AG04450 (cell line): ENCODE measurements at regions of chr4 and their contacts with region 1.

Region 1: GRCh38 chr4:80266253-80266901 is at the start of gene FGF5:
- DNase-seq: peak; percentile 85
- H3K4me3 ChIP-seq: peak within 1 kb of the TSS; percentile 63
- H3K27ac ChIP-seq: peak within 1 kb of the TSS; percentile 96
- H3K27me3 ChIP-seq: no peaks in the 10 kb centered on the region
- CTCF ChIP-seq: no peak
- polyA plus RNA-seq, gene FGF5: 39.9 and 40.7 TPM in 2 replicates

Region 2: DNA sequence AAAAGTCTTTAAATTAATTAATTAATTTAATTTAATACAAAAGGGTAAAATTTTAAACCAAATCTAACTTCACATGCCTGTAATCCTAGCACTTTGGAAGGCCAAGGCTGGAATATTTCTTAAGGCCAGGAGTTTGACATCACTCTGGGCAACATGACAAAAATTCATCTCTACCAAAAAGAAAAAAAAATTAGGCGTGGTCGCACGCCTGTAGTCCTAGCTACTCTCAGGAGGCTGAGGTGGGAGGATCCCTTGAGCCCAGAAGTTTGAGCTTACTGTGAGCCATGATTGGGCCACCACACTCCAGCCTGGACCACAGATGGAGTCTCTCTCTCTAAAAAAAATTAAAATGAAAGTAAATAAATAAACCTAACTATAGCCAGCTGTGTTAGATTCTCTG is 154.1 kb before region 1 on chr4:
- CTCF ChIA-PET with region 1: no interaction called
- POLR2A ChIA-PET with region 1: no interaction called
- DNase-seq: no peak
- H3K4me3 ChIP-seq: no peak overlapping the region
- H3K27ac ChIP-seq: no peak overlapping the region
- H3K27me3 ChIP-seq: no peaks in the 10 kb centered on the region
- CTCF ChIP-seq: no peak

Region 3: GRCh38 chr4:80125252-80126177 is 140.9 kb before region 1 on chr4:
- CTCF ChIA-PET with region 1: no interaction called
- POLR2A ChIA-PET with region 1: no interaction called
- DNase-seq: no peak
- H3K4me3 ChIP-seq: no peak overlapping the region
- H3K27ac ChIP-seq: no peak overlapping the region
- H3K27me3 ChIP-seq: no peaks in the 10 kb centered on the region
- CTCF ChIP-seq: peak; percentile 62

Region 4: GRCh38 chr4:80196922-80197573 is 69.3 kb before region 1 on chr4 and contains the start of gene PRDM8:
- CTCF ChIA-PET with region 1: no interaction called
- POLR2A ChIA-PET with region 1: interaction called, 16 read pairs
- DNase-seq: no peak
- H3K4me3 ChIP-seq: peak within 1 kb of the TSS; percentile 69
- H3K27ac ChIP-seq: peak within 1 kb of the TSS; percentile 61
- H3K27me3 ChIP-seq: no peaks in the 10 kb centered on the region
- CTCF ChIP-seq: no peak
- polyA plus RNA-seq, gene PRDM8: 12.8 and 14.3 TPM in 2 replicates

Region 5: GRCh38 chr4:80237992-80238391 is 28.4 kb before region 1 on chr4:
- CTCF ChIA-PET with region 1: interaction called, 8 read pairs
- POLR2A ChIA-PET with region 1: interaction called, 29 read pairs
- DNase-seq: peak; percentile 78
- H3K4me3 ChIP-seq: peak overlapping the region; percentile 34
- H3K27ac ChIP-seq: peak overlapping the region; percentile 82
- H3K27me3 ChIP-seq: no peaks in the 10 kb centered on the region
- CTCF ChIP-seq: no peak

Region 6: DNA sequence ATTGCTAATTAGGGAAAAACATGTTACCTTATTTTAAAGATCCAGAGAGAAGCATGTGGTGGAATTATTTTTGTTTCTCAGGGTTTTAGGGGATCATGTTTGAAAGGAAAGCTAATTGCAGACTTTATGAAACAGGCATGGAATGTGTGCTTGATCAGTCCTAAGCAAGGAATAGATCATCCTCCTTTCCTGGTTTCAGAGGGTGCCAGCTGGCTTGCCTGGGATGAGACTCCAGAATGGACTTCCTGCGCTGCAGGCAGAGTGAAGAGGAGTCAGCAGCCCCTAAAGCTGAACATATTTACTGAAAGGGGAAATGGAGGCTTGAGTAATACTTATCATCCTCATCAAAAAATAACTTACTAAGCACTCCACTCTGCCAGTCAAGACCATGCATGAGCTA is 13.4 kb after region 1 on chr4:
- CTCF ChIA-PET with region 1: interaction called, 4 read pairs
- POLR2A ChIA-PET with region 1: interaction called, 10 read pairs
- DNase-seq: no peak
- H3K4me3 ChIP-seq: no peak overlapping the region
- H3K27ac ChIP-seq: no peak overlapping the region
- H3K27me3 ChIP-seq: no peaks in the 10 kb centered on the region
- CTCF ChIP-seq: no peak

Region 7: GRCh38 chr4:80322716-80323115 is 56.3 kb after region 1 on chr4:
- CTCF ChIA-PET with region 1: interaction called, 10 read pairs
- POLR2A ChIA-PET with region 1: interaction called, 5 read pairs
- DNase-seq: no peak
- H3K4me3 ChIP-seq: no peak overlapping the region
- H3K27ac ChIP-seq: no peak overlapping the region
- H3K27me3 ChIP-seq: no peaks in the 10 kb centered on the region
- CTCF ChIP-seq: peak; percentile 47